ENCODE measurements at regions of chr1 and their contacts with region 1.

Region 1: GRCh38 chr1:53889304-53890298 is at the start of gene YIPF1:
- DNase-seq: peak; percentile 95
- ATAC-seq: peak; percentile 99
- total RNA-seq, gene YIPF1: 13.6 TPM

Region 2: DNA sequence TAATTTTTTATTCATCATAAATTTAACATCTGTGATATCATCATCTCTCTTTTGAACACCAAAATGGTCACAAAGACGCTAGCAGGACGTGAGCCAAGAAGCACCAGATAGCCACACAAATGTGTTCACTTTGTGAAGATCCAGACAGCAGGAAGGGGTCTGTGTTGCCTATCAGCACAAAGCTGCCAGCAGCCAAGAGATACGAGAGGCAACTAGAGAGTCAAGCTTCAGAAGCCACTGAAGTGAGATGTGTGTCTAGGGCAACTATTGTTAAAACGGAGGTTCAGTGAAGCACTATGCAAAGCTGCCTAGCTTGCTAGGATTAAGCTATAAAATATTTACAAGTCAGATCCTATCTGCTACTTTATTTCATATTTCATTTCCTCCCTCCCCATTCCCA is 96.8 kb before region 1 on chr1:
- intact Hi-C with region 1: no loop called
- DNase-seq: no peak
- ATAC-seq: no peak

Region 3: GRCh38 chr1:53945433-53946251 is 56.0 kb after region 1 on chr1 and contains the start of gene IFT25:
- intact Hi-C with region 1: loop called (anchors 5 kb)
- DNase-seq: peak; percentile 98
- ATAC-seq: peak; percentile 95
- total RNA-seq, gene IFT25: 9.9 TPM

Measured in Right ventricle myocardium superior (tissue), 1 donor.